ENCODE measurements at regions of chr5 and their contacts with region 1.

Region 1: DNA sequence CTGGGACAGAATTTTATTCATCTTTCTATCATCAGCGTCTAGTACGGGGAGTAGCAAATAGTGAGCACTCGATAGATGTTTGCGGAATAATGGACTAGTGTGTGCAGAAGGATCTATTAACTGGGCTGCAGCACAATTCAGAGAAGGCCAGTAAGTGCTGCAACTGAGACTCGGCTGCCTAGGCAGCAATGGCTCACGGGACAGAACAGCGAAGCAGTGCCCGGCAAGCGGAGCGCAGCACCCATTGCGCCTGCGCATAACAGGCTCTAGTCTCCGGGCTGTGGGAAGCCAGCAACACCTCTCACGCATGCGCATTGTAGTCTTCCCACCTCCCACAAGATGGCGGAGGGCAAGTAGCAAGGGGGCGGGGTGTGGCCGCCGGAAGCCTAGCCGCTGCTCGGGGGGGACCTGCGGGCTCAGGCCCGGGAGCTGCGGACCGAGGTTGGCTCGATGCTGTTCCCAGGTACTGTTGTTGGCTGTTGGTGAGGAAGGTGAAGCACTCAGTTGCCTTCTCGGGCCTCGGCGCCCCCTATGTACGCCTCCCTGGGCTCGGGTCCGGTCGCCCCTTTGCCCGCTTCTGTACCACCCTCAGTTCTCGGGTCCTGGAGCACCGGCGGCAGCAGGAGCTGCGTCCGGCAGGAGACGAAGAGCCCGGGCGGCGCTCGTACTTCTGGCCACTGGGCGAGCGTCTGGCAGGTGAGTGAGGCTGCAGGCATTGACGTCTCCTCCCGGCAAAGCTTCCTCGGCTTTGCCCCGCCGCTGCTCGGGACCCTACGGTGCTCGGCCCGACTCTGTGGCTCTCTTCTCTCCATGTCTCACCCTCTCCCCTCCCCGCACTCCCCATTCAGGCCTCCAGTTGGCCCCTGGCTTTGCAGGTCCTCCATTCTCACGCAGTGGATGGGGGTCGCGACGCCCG is 30.2 kb upstream of the APC start:
- DNase-seq: peak; percentile 88 to 99
- ATAC-seq: peak; percentile 95 to 98 (median 97)
- H3K4me3 ChIP-seq: peak overlapping the region; percentile 83
- H3K4me3 Mint-ChIP-seq: peak overlapping the region; percentile 93
- H3K27ac ChIP-seq: peak overlapping the region; percentile 78
- H3K27ac Mint-ChIP-seq: peak overlapping the region; percentile 90 to 95
- H3K4me1 ChIP-seq: peaks cover 17% of the 10 kb centered on the region
- H3K4me1 Mint-ChIP-seq: peaks cover 47 to 59% of the 10 kb centered on the region in 2 donors
- H3K27me3 ChIP-seq: no peaks in the 10 kb centered on the region
- H3K27me3 Mint-ChIP-seq: peaks cover 8 to 16% of the 10 kb centered on the region in 2 donors
- CTCF ChIP-seq: no peak

Region 2: GRCh38 chr5:112160652-112161391 is 546.6 kb before region 1 on chr5:
- intact Hi-C with region 1: loop called (anchors 2 kb)
- DNase-seq: peak; percentile 92 to 96
- ATAC-seq: peak; percentile 99 to 100 (median 99)
- H3K4me3 ChIP-seq: peak overlapping the region; percentile 85
- H3K4me3 Mint-ChIP-seq: peak overlapping the region; percentile 97
- H3K27ac ChIP-seq: peak overlapping the region; percentile 57
- H3K27ac Mint-ChIP-seq: peak overlapping the region; percentile 88
- H3K4me1 ChIP-seq: peaks cover 11% of the 10 kb centered on the region
- H3K4me1 Mint-ChIP-seq: peaks cover 37 to 40% of the 10 kb centered on the region in 2 donors
- H3K27me3 ChIP-seq: no peaks in the 10 kb centered on the region
- H3K27me3 Mint-ChIP-seq: peaks cover 9 to 15% of the 10 kb centered on the region in 2 donors
- CTCF ChIP-seq: peak; percentile 89

Region 3: DNA sequence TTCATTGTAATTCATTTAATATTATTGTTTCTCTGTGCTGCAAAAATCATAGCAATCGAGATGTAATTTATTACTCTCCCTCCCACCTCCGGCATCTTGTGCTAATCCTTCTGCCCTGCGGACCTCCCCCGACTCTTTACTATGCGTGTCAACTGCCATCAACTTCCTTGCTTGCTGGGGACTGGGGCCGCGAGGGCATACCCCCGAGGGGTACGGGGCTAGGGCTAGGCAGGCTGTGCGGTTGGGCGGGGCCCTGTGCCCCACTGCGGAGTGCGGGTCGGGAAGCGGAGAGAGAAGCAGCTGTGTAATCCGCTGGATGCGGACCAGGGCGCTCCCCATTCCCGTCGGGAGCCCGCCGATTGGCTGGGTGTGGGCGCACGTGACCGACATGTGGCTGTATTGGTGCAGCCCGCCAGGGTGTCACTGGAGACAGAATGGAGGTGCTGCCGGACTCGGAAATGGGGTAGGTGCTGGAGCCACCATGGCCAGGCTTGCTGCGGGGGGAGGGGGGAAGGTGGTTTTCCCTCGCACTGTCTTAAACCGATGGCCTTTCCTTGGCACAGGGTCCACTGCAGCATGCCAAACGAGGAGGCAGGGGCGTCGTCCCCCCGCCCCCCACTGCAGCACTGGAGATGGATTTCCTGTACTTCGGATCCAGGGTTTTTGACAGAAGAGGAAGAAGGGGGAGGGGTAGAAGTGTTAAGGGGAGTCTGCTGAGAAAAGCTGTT is 30.2 kb after region 1 on chr5 and contains the start of gene APC:
- intact Hi-C with region 1: loop called (anchors 1 kb)
- DNase-seq: peak; percentile 82 to 86
- ATAC-seq: peak; percentile 96 to 98 (median 97)
- H3K4me3 ChIP-seq: peak within 1 kb of the TSS; percentile 59
- H3K4me3 Mint-ChIP-seq: peak within 1 kb of the TSS; percentile 98
- H3K27ac ChIP-seq: peak within 1 kb of the TSS; percentile 24
- H3K27ac Mint-ChIP-seq: peak within 1 kb of the TSS; percentile 53 to 93
- H3K4me1 ChIP-seq: peaks cover 8% of the 10 kb centered on the region
- H3K4me1 Mint-ChIP-seq: peaks cover 30 to 33% of the 10 kb centered on the region in 2 donors
- H3K27me3 ChIP-seq: no peaks in the 10 kb centered on the region
- H3K27me3 Mint-ChIP-seq: no peaks in the 10 kb centered on the region
- CTCF ChIP-seq: no peak
- total RNA-seq, gene APC: 40.1 to 52.3 (median 49.0) TPM

Region 4: GRCh38 chr5:112860929-112861637 is 153.6 kb after region 1 on chr5 and contains the start of gene SRP19:
- intact Hi-C with region 1: loop called (anchors 5 kb)
- DNase-seq: peak; percentile 87 to 97
- ATAC-seq: peak; percentile 93 to 97 (median 96)
- H3K4me3 ChIP-seq: peak within 1 kb of the TSS; percentile 75
- H3K4me3 Mint-ChIP-seq: peak within 1 kb of the TSS; percentile 96
- H3K27ac ChIP-seq: peak within 1 kb of the TSS; percentile 78
- H3K27ac Mint-ChIP-seq: peak within 1 kb of the TSS; percentile 95 to 96
- H3K4me1 ChIP-seq: peaks cover 25% of the 10 kb centered on the region
- H3K4me1 Mint-ChIP-seq: peaks cover 24 to 35% of the 10 kb centered on the region in 2 donors
- H3K27me3 ChIP-seq: peaks cover 5% of the 10 kb centered on the region
- H3K27me3 Mint-ChIP-seq: peaks cover 9 to 24% of the 10 kb centered on the region in 2 donors
- CTCF ChIP-seq: no peak
- total RNA-seq, gene SRP19: 52.8 to 58.5 (median 54.7) TPM

Region 5: DNA sequence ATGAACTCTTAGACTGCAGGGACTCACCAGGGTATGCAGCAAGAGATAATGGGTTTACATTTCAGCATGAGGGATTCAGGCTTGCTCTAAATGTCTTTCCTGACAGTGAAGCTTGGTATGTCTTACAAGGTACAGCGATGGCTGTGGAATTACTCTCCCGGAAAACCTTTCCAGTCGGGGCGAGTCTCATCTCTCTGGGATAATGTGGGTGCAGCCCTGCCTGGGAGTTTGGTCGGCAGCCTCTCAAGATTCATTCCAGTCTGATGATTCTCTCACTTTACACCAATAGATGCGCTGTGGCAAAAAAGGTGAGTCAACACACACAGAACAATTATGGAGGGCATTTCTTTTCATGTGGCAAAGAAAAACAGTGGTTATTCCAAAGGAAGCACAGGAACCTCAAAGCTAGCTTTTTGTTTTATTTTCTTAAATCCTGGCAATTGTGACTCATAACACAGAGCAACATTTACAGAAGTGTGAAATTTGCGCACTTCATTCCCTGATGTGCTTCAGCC is 459.5 kb after region 1 on chr5:
- intact Hi-C with region 1: no loop called
- DNase-seq: no peak
- ATAC-seq: no peak
- H3K4me3 ChIP-seq: no peak overlapping the region
- H3K4me3 Mint-ChIP-seq: no peak overlapping the region
- H3K27ac ChIP-seq: no peak overlapping the region
- H3K27ac Mint-ChIP-seq: no peak overlapping the region
- H3K4me1 ChIP-seq: no peaks in the 10 kb centered on the region
- H3K4me1 Mint-ChIP-seq: no peaks in the 10 kb centered on the region
- H3K27me3 ChIP-seq: peaks cover 3% of the 10 kb centered on the region
- H3K27me3 Mint-ChIP-seq: peaks cover 15 to 58% of the 10 kb centered on the region in 2 donors
- CTCF ChIP-seq: no peak